ENCODE measurements at regions of chr2 and their contacts with region 1.

Region 1: DNA sequence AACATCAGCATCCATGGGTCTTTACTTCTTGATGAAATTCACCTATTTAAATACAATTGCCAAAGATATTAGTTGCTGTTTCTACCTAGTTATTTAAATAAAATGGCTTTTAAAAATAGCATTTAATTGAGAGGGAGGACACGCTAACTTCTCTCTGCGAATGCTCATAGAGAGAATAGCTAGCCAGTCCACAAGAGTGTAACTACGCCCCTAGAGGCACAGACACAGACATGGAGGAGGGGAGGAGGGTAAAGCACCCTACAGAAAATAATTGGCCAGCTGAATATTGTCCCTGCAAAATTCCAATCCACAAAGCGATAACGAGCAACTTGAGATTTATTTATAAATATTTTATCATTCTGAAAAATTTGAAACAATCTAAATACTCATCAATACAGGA is 97.0 kb upstream of the PAPOLG start:
- DNase-seq: peak; percentile 19
- H3K4me3 ChIP-seq: no peak overlapping the region
- H3K27ac ChIP-seq: no peak overlapping the region
- H3K4me1 ChIP-seq: no peaks in the 10 kb centered on the region
- H3K27me3 ChIP-seq: peaks cover 18% of the 10 kb centered on the region
- CTCF ChIP-seq: peak; percentile 50

Region 2: GRCh38 chr2:59830601-59831000 is 828.4 kb before region 1 on chr2:
- CTCF ChIA-PET with region 1: no interaction called
- POLR2A ChIA-PET with region 1: no interaction called
- intact Hi-C with region 1: no loop called
- DNase-seq: no peak
- H3K4me3 ChIP-seq: no peak overlapping the region
- H3K27ac ChIP-seq: no peak overlapping the region
- H3K4me1 ChIP-seq: no peaks in the 10 kb centered on the region
- H3K27me3 ChIP-seq: peaks cover 6% of the 10 kb centered on the region
- CTCF ChIP-seq: no peak

Region 3: GRCh38 chr2:60674524-60675165 is 15.6 kb after region 1 on chr2:
- CTCF ChIA-PET with region 1: interaction called, 22 read pairs
- POLR2A ChIA-PET with region 1: no interaction called
- intact Hi-C with region 1: no loop called
- DNase-seq: peak; percentile 83
- H3K4me3 ChIP-seq: no peak overlapping the region
- H3K27ac ChIP-seq: no peak overlapping the region
- H3K4me1 ChIP-seq: no peaks in the 10 kb centered on the region
- H3K27me3 ChIP-seq: no peaks in the 10 kb centered on the region
- CTCF ChIP-seq: peak; percentile 96

Region 4: GRCh38 chr2:60775048-60775639 is 116.1 kb after region 1 on chr2:
- CTCF ChIA-PET with region 1: no interaction called
- POLR2A ChIA-PET with region 1: no interaction called
- intact Hi-C with region 1: no loop called
- DNase-seq: no peak
- H3K4me3 ChIP-seq: no peak overlapping the region
- H3K27ac ChIP-seq: no peak overlapping the region
- H3K4me1 ChIP-seq: no peaks in the 10 kb centered on the region
- H3K27me3 ChIP-seq: no peaks in the 10 kb centered on the region
- CTCF ChIP-seq: no peak

Region 5: DNA sequence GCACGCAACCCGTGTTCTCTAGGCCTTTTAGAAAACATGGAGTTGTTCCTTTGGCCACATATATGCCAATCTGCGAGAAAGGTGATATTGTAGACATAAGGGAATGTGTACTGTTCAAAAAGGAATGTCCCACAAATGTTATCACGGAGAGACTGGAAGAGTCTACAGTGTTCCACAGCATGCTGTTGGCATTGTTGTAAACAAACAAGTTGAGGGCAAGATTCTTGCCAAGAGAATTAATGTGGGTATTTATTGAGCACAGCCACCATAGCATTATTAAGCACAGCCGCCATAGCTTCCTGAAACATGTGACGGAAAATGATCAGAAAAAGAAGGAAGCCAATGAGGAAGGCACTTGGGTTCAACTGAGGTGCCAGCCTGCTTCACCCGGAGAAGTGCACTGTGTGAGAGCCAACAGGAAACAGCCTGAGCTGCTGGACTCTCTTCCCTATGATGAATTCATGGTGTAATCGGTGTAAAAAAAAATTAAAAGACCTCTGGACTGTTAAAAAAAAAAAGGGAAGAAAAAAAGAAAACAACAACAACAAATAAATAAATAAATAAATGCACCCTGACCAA is 193.3 kb after region 1 on chr2:
- CTCF ChIA-PET with region 1: no interaction called
- POLR2A ChIA-PET with region 1: no interaction called
- intact Hi-C with region 1: no loop called
- DNase-seq: no peak
- H3K4me3 ChIP-seq: no peak overlapping the region
- H3K27ac ChIP-seq: no peak overlapping the region
- H3K4me1 ChIP-seq: no peaks in the 10 kb centered on the region
- H3K27me3 ChIP-seq: no peaks in the 10 kb centered on the region
- CTCF ChIP-seq: no peak

Measured in A673 (cell line).